ENCODE measurements at regions of chr21 and their contacts with region 1.

Region 1: DNA sequence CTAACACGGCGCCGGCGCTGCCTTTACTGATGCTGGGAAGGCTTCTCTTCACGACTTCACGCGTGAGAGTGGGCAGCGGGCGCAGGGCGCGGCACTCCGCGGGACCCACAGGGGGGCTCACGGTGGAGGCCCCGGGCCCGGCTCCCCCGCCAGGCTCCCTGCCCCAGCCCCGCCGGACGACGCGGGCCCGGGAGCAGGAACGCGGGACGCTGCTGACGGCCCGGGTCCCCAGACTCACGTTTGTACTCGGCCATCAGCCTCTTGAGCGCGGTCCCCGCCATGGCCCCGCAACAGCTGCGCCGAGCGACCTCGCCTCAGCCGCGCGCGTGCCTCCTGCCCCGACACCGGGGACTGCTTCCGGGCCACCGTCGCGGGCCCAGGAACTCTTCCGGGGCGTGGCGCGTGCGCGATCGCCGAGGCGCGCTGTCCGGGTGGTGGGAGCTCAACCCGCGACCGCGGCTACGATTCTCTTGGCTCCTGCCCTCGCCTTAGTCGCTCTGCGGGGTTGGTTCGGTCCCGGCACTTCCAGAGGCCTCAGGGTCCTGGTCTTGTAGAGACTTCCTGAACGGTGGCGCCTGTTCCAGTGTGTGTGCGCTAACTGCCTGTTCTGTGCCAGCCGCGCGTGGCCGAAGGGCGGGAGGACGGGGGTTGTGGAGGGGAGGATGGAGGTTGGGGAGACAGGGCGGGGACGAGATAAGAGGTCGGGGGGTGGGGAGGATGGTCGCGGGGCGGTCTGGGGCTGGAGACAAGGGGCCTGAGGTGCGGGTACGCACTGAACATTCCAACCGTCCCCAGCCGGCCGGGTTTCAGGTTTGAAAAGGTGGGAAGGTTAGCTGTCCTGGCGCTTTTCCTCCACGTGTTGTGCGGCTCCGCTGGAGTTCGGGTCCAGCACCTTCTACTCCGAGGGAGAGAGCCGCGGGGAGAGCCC is at the start of gene UBE2G2:
- DNase-seq: peak; percentile 84 to 88 (median 87)
- ATAC-seq: peak; percentile 91 to 95 (median 92)
- H3K4me3 ChIP-seq: peak within 1 kb of the TSS; percentile 87 to 99 (median 99)
- H3K27ac ChIP-seq: peak within 1 kb of the TSS in 2 of 3 donors; percentile 37 to 49
- H3K4me1 ChIP-seq: peaks cover 0 to 26% (median 12%) of the 10 kb centered on the region in 4 donors
- H3K27me3 ChIP-seq: no peaks in the 10 kb centered on the region
- CTCF ChIP-seq: no peak
- POLR2A ChIP-seq: peak; percentile 66
- total RNA-seq, gene UBE2G2: 41.5 to 54.6 (median 49.9) TPM

Region 2: DNA sequence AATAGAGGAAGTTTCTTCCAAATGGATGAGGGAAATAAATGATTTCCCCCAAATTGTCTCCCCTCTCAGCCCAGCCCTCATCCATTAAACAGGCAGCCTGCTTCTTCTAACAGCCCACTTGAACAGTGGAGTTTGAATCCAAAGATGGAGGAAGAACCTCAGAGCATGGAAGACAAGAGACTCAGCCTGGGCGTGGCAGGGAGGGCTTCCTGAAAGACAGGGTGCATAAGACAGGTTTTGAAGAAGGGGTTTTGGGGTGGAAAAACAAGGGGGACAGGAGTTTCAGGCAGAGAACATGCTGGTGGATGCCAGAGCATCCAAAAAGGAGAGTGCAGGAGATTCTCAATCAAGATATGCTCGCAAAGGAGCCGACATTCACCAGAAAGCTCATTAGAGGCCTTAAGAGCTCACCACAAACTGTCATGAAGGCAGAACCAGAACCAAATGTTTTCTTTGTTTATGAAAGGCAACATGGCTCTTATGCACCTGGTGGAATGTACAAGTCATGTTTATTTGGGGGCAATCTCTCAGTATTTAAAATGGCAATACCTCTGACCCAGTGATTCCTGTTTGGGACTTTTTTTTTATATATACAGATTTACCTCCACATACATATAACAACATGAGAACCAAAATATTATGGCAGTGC is 63.9 kb before region 1 on chr21:
- intact Hi-C with region 1: no loop called
- DNase-seq: no peak
- ATAC-seq: no peak
- H3K4me3 ChIP-seq: no peak overlapping the region
- H3K27ac ChIP-seq: no peak overlapping the region
- H3K4me1 ChIP-seq: no peaks in the 10 kb centered on the region
- H3K27me3 ChIP-seq: no peaks in the 10 kb centered on the region
- CTCF ChIP-seq: no peak
- POLR2A ChIP-seq: no peak

Region 3: GRCh38 chr21:44845399-44846223 is 43.9 kb after region 1 on chr21:
- intact Hi-C with region 1: no loop called
- DNase-seq: peak in 2 of 3 donors; percentile 70 to 73
- ATAC-seq: peak; percentile 57 to 76 (median 66)
- H3K4me3 ChIP-seq: peak overlapping the region in 1 of 3 donors; percentile 36
- H3K27ac ChIP-seq: no peak overlapping the region
- H3K4me1 ChIP-seq: peaks cover 0 to 3% (median 1%) of the 10 kb centered on the region in 4 donors
- H3K27me3 ChIP-seq: no peaks in the 10 kb centered on the region
- CTCF ChIP-seq: peak in 3 of 4 donors; percentile 27 to 46 (median 33)
- POLR2A ChIP-seq: no peak

Region 4: GRCh38 chr21:44907966-44908895 is 106.5 kb after region 1 on chr21:
- intact Hi-C with region 1: loop called in 1 of 2 experiments (anchors 10 kb)
- DNase-seq: no peak
- ATAC-seq: no peak
- H3K4me3 ChIP-seq: no peak overlapping the region
- H3K27ac ChIP-seq: no peak overlapping the region
- H3K4me1 ChIP-seq: peaks cover 2 to 31% (median 15%) of the 10 kb centered on the region in 4 donors
- H3K27me3 ChIP-seq: no peaks in the 10 kb centered on the region
- CTCF ChIP-seq: no peak
- POLR2A ChIP-seq: no peak